ENCODE measurements at regions of chr5 and their contacts with region 1.

Region 1: GRCh38 chr5:157590478-157590877 is 14.9 kb upstream of the ADAM19 start:
- DNase-seq: no peak
- ATAC-seq: no peak
- H3K4me3 Mint-ChIP-seq: no peak overlapping the region
- H3K27ac Mint-ChIP-seq: no peak overlapping the region
- H3K4me1 Mint-ChIP-seq: peaks cover 50% of the 10 kb centered on the region
- H3K27me3 Mint-ChIP-seq: no peaks in the 10 kb centered on the region
- CTCF ChIP-seq: no peak

Region 2: GRCh38 chr5:157245477-157245876 is 345.0 kb before region 1 on chr5:
- CTCF ChIA-PET with region 1: no interaction called
- POLR2A ChIA-PET with region 1: no interaction called
- intact Hi-C with region 1: no loop called
- DNase-seq: no peak
- ATAC-seq: no peak
- H3K4me3 Mint-ChIP-seq: no peak overlapping the region
- H3K27ac Mint-ChIP-seq: no peak overlapping the region
- H3K4me1 Mint-ChIP-seq: peaks cover 11% of the 10 kb centered on the region
- H3K27me3 Mint-ChIP-seq: no peaks in the 10 kb centered on the region
- CTCF ChIP-seq: no peak

Region 3: GRCh38 chr5:157670662-157671591 is 80.4 kb after region 1 on chr5 and contains the start of gene C5orf52:
- CTCF ChIA-PET with region 1: no interaction called
- POLR2A ChIA-PET with region 1: interaction called, 21 read pairs
- intact Hi-C with region 1: no loop called
- DNase-seq: no peak
- ATAC-seq: peak; percentile 55
- H3K4me3 Mint-ChIP-seq: peak within 1 kb of the TSS; percentile 95
- H3K27ac Mint-ChIP-seq: peak within 1 kb of the TSS; percentile 65
- H3K4me1 Mint-ChIP-seq: peaks cover 28% of the 10 kb centered on the region
- H3K27me3 Mint-ChIP-seq: no peaks in the 10 kb centered on the region
- CTCF ChIP-seq: no peak
- total RNA-seq, gene C5orf52: not detected in 2 replicates